Keratinocyte (primary cell): ENCODE measurements at regions of chr12 and their contacts with region 1.

Region 1: DNA sequence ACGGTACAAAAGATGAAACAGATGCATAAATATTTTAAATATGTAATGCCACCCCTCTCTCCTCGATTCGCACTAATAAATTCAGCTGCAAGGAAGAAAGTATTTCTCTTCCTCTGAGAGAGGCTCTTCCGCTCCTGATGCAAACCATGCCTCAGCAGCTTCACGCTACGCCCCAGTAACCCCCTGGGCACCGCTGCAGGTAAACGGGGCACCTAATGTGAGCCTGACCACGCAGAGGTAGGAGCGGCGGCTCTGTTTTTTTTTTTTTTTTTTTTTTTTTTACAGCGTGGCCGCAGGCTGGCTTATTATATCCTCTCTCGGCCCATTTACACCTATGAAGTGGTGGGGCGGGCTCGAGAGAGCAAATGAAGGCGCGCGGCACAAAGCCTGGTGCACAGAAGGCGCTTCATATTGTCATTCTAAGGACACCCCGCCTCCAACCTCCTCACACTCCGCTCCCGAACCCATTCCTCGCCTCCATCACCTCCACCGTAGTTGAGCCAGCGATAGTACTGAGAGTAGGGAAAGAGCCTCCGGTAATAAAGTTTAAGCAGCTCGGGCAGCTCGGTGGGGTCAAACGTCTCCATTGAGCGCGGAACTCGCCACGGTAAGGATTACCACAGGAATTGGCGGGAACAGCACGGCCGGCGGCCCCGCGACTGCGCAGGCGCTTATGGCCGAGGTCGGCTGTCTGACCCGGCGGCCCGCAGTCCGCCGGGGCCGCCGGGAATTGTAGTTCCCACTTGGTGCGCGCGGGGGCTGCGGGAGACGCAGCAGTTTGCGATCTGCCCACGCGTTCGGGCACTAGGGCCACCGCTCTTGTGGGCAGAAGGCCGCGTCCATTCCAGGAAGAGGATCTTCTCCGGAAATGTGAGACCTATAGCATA is at the start of gene PRIM1:
- DNase-seq: no peak
- H3K4me3 ChIP-seq: peak within 1 kb of the TSS; percentile 64 to 96 (median 89)
- H3K27ac ChIP-seq: peak within 1 kb of the TSS; percentile 73
- H3K4me1 ChIP-seq: peaks cover 7% of the 10 kb centered on the region
- H3K27me3 ChIP-seq: no peaks in the 10 kb centered on the region
- CTCF ChIP-seq: no peak
- polyA plus RNA-seq, gene PRIM1: 2.7 to 12.0 TPM (median 10.1 TPM) in 3 replicates

Region 2: DNA sequence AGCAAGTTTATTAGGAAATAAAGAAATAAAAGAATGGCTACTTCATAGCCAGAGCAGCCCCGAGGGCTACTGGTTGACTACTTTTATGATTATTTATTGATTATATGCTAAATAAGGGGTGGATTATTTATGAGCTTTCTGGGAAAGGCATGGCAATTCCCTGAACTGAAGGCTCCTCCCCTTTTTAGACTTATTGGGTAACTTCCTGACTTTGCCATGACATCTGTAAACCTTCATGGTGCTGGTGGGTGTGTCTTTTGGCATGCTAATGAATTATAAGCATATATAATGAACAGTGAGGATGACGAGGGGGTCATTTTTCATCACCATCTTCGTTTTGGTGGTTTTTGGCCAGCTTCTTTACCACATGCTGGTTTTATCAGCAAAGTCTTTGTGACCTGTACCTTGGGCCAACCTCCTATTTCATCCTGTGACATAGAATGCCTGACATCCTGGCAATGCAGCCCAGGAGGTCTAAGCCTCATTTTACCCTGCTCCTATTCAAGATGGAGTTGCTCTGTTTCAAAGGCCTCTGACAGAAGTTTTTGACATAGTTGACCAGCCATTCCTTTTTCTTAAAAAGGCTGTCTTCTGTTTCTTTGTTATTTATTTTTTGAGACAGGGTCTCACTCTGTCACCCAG is 52.8 kb before region 1 on chr12:
- dilution Hi-C with region 1: no loop called
- DNase-seq: no peak
- H3K4me3 ChIP-seq: no peak overlapping the region
- H3K27ac ChIP-seq: no peak overlapping the region
- H3K4me1 ChIP-seq: no peaks in the 10 kb centered on the region
- H3K27me3 ChIP-seq: no peaks in the 10 kb centered on the region
- CTCF ChIP-seq: no peak

Region 3: GRCh38 chr12:57005980-57006808 is 254.2 kb after region 1 on chr12 and contains the start of gene ZBTB39:
- dilution Hi-C with region 1: loop called (anchors 10 kb)
- DNase-seq: no peak
- H3K4me3 ChIP-seq: peak within 1 kb of the TSS; percentile 79 to 85 (median 81)
- H3K27ac ChIP-seq: peak within 1 kb of the TSS; percentile 38
- H3K4me1 ChIP-seq: peaks cover 6% of the 10 kb centered on the region
- H3K27me3 ChIP-seq: no peaks in the 10 kb centered on the region
- CTCF ChIP-seq: peak in 2 of 3 experiments; percentile 46 to 70
- polyA plus RNA-seq, gene ZBTB39: 3.4 to 5.4 TPM (median 4.1 TPM) in 3 replicates